Body of pancreas (tissue), 4 donors: ENCODE measurements at regions of chr17 and their contacts with region 1.

Region 1: GRCh38 chr17:29148790-29149430 is 31.3 kb downstream of the MYO18A start:
- DNase-seq: peak; percentile 95 to 97 (median 95)
- ATAC-seq: peak; percentile 96
- H3K4me3 ChIP-seq: peak overlapping the region in 1 of 2 donors; percentile 24
- H3K27ac ChIP-seq: peak overlapping the region; percentile 58 to 85 (median 64)
- H3K4me1 ChIP-seq: peaks cover 61% of the 10 kb centered on the region
- H3K27me3 ChIP-seq: no peaks in the 10 kb centered on the region
- CTCF ChIP-seq: peak; percentile 94 to 99 (median 98)
- POLR2A ChIP-seq: peak in 2 of 3 donors; percentile 53 to 55

Region 2: GRCh38 chr17:29069526-29070041 is 79.3 kb before region 1 on chr17:
- intact Hi-C with region 1: no loop called
- DNase-seq: no peak
- ATAC-seq: peak; percentile 41
- H3K4me3 ChIP-seq: no peak overlapping the region
- H3K27ac ChIP-seq: no peak overlapping the region
- H3K4me1 ChIP-seq: no peaks in the 10 kb centered on the region
- H3K27me3 ChIP-seq: no peaks in the 10 kb centered on the region
- CTCF ChIP-seq: no peak
- POLR2A ChIP-seq: no peak

Region 3: GRCh38 chr17:29089601-29090044 is 59.3 kb before region 1 on chr17:
- intact Hi-C with region 1: no loop called
- DNase-seq: no peak
- ATAC-seq: no peak
- H3K4me3 ChIP-seq: no peak overlapping the region
- H3K27ac ChIP-seq: no peak overlapping the region
- H3K4me1 ChIP-seq: no peaks in the 10 kb centered on the region
- H3K27me3 ChIP-seq: no peaks in the 10 kb centered on the region
- CTCF ChIP-seq: no peak
- POLR2A ChIP-seq: no peak

Region 4: DNA sequence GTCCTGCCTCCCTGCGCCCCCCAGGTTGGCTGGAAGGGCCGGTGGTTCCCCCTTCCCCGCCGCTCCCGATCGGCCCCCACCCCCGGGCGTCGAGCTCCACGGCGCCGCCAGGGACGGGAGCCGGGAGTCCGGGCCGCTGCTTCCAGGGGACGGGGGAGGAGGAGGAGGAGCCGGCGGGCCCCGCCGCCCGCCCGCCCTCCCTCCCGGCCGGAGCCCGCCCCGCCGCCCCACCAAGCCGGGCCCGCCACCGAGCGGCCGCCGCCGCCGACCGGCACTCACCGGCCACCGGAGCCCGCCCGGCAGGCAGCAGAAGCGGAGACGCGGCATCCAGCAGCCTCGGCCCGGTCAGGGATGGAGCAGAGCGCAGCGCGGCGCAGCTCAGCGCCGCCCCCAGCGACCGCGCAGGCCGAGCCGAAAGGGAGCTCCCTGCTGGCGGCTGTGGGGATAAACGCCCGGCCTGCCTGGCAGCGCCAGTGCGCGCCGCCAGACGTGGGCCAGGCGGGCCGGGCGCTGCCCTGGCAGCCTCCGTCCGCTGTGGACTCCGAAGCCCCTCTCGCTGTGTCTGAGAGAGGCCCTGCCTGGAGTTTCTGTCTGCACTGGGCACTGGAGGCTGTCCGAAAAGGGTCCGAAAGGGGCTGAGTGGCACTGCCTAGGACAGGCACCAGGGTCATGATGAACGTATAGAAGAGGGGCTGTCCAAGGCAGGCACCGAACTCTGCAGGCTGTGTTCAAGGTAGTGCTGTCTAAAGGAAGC is 31.3 kb after region 1 on chr17 and contains the start of gene MYO18A:
- intact Hi-C with region 1: loop called (anchors 5 kb)
- DNase-seq: peak; percentile 79 to 85 (median 83)
- ATAC-seq: peak; percentile 75
- H3K4me3 ChIP-seq: peak within 1 kb of the TSS in 1 of 2 donors; percentile 33
- H3K27ac ChIP-seq: peak within 1 kb of the TSS; percentile 95 to 98 (median 98)
- H3K4me1 ChIP-seq: peaks cover 43% of the 10 kb centered on the region
- H3K27me3 ChIP-seq: no peaks in the 10 kb centered on the region
- CTCF ChIP-seq: peak; percentile 78 to 99 (median 86)
- POLR2A ChIP-seq: peak; percentile 31 to 55 (median 36)
- total RNA-seq, gene MYO18A: 45.4 to 73.2 TPM

Region 5: GRCh38 chr17:29196769-29197515 is 48.0 kb after region 1 on chr17:
- intact Hi-C with region 1: no loop called
- DNase-seq: peak in 1 of 4 donors; percentile 6
- ATAC-seq: no peak
- H3K4me3 ChIP-seq: no peak overlapping the region
- H3K27ac ChIP-seq: no peak overlapping the region
- H3K4me1 ChIP-seq: no peaks in the 10 kb centered on the region
- H3K27me3 ChIP-seq: no peaks in the 10 kb centered on the region
- CTCF ChIP-seq: no peak
- POLR2A ChIP-seq: no peak

Region 6: DNA sequence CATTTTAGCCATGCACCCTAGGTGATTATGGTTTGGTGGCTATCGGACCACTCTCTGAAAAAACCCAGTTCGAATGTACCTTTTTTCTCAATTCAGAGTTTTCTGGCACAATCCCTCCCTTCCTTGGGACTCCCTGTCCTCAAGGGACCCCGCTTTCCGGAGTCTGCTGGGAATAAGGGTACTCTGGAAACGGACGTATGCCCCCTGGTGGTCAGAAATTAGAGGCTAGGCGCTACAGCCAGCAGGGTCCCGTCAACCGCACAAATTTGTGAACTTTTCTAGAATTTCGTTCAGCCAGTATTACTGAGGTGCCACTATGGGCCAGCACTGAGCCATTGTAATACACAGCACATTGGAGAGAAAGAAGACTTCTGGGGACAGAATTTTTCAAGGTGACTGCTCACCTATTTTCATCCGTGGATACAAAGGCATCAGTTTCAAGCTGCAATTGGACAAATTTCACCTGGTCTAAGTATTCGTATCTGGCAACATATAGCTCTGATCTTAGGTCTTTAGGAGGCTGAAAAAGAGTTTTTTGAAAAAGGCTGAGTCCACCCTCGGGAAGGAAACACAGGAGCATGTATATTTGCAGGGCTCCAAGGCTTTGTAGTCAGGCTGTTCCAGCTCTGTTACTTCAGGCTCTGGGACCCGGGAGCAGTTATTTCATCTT is 70.6 kb after region 1 on chr17:
- intact Hi-C with region 1: loop called (anchors 5 kb)
- DNase-seq: peak; percentile 79 to 85 (median 82)
- ATAC-seq: peak; percentile 96
- H3K4me3 ChIP-seq: no peak overlapping the region
- H3K27ac ChIP-seq: no peak overlapping the region
- H3K4me1 ChIP-seq: peaks cover 8% of the 10 kb centered on the region
- H3K27me3 ChIP-seq: no peaks in the 10 kb centered on the region
- CTCF ChIP-seq: peak; percentile 86 to 97 (median 92)
- POLR2A ChIP-seq: no peak

Region 7: GRCh38 chr17:29283271-29283895 is 134.5 kb after region 1 on chr17:
- intact Hi-C with region 1: loop called (anchors 10 kb)
- DNase-seq: no peak
- ATAC-seq: no peak
- H3K4me3 ChIP-seq: no peak overlapping the region
- H3K27ac ChIP-seq: no peak overlapping the region
- H3K4me1 ChIP-seq: peaks cover 64% of the 10 kb centered on the region
- H3K27me3 ChIP-seq: no peaks in the 10 kb centered on the region
- CTCF ChIP-seq: no peak
- POLR2A ChIP-seq: no peak